Right ventricle myocardium inferior (tissue), 1 donor: ENCODE measurements at regions of chr1 and their contacts with region 1.

Region 1: DNA sequence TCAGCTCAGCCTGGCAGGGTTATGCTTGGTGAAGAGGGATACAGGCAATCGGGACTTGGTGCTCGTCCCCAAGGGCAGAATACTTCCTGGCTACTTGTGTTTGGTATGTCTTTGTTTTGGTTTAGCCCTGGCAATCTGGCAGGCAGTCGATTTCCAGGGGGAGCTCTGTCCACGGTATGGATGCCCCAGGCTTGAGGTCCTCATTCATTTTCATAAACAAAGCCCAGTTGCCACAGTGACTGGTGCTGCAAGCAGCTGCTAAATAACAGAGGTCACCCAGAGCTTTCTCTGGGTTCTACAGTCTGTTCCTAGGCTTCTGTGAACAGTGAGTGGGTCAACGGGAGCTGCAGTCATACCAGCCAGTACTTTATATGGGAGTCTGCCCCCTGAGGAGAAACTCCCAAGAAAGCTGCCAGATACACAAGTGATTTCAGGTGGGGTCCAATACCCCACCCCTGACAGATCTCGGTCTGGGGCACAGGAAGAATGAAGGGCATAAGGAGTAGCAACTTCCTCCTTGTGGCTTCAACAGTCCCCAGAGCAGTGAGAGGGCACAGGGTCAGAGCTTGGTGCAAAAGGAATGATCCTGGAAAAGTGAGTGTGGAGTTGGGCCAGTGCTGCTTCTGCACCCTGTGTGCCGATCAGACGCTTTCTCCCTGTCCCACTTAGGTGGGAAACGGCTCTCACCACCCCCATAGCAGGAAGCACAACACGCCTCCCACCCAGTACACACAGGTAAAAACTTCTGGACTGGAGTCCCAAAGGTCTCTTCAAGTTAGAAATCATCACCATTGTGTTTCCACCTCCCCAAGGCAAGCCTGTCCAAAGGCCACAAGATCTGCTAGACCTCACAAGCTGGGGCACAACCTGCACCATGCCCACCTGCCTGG is 55.5 kb downstream of the TGFBR3 start:
- DNase-seq: peak; percentile 77
- ATAC-seq: peak; percentile 76

Region 2: DNA sequence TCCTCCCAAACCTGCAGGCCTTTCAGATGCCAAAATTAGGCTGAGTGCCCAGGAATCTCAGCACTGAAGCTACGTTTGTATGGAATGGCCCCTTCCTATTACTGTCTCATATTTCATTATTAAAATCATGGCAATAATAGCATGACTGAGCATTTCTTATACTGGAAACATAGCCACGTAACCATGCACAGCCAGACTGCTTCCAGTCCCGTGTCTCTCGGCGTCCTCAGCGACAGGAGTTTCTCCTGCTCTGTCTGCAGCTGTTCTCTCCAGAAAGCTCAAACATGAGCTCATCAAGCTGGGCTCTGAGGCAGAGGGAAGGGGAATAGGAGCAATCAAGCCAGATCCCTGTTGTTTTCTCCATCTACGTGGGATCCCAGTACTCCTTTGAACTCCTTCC is 225.9 kb before region 1 on chr1:
- intact Hi-C with region 1: loop called (anchors 2 kb)
- DNase-seq: no peak
- ATAC-seq: peak; percentile 20

Region 3: DNA sequence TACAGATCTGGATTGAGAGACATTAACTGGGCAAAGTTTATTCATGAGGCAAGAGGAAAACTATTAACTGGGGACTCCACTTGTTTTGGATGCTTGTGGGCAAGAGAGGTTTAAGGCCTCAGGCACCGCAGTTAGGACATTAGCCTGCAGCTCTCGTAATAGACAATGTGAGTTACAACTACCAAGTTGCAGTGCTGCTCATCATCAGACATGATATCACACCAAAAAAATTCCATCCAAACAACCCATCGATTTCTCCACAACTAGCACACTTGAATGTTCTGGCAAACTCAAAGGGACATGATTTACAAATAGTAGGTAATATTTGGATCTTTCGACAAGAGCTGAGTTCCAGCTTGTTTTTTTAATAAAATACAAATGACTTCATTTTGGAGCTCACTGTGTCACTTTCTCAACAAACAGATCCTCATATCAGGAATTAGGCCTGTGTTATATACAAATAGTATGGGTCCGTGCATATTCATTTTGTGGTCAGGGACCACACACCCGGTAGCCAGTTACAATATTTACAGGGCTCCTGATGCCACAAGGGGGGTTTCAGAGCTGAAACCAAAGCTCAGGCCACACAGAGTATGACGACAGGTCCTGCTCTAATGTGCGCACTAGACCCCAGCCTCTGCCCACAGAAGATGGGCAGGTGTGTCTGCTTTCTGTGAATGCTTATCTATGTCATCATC is 72.6 kb before region 1 on chr1:
- intact Hi-C with region 1: no loop called
- DNase-seq: no peak
- ATAC-seq: peak; percentile 19

Region 4: DNA sequence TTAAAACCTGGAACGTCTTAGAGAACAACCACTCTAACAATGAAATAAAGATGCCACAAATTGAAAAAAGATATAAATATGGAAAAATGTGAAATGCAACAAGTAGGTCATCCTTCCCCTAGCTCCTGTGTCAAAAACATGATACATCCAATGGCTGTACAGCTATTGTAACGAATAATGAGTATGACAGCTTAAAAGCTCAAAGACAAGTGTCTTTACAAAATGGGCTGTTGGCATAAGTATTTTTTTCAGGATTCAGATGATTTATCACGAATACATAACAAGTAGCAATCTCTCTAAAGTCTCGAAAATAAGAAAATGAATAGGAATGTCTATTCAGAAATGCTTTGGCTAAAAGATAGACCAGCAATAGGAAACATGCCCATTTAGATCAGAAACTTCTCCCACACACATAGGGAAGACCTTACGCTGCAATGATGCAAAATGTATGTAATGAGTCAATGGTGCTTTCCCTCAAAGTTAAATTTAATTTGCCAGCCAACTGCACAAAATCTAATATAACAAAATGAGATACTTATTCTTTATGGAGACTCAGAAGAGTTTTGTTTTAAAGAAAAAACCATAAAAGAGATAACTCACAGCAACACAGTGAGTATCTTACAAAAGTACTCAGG is 47.2 kb after region 1 on chr1:
- intact Hi-C with region 1: no loop called
- DNase-seq: no peak
- ATAC-seq: no peak